ENCODE measurements at regions of chr6 and their contacts with region 1.

Region 1: DNA sequence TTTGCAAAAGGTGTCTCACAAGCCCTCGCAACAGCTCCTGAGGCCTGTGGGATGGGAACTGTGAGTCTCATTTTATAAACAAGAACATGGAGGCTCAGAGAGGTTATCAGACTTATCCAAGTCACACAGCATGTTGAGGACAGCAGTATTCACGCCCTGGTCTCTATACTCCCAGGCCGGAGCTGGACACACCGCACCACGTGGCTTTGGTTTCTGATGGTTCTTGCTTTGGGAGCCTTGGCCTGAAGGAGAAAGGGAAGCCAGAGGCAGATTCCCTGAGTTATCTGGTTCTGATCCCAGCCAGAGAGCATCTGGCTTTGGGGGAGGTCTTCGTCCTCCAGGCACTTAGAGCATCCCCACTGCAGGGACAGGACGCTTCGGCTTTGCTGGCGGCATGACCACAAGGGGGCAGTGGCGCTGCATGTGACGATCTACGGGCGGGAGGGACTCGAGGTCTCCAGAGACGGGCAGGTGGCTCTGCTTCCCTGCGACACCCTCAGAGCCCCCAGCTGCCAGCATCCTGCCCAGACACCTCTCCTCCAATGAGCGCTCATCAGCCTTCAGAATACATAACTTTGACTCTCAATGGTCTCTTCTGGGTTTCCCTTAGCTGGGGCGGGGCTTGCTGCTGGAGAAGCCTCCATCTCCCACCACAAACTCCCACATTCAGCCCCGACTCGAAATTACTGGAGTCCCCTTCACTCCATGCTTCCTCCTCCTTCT is 51.4 kb upstream of the SAYSD1 start:
- DNase-seq: peak; percentile 93
- ATAC-seq: peak; percentile 97
- H3K4me3 Mint-ChIP-seq: no peak overlapping the region
- H3K27ac Mint-ChIP-seq: no peak overlapping the region
- H3K4me1 Mint-ChIP-seq: peaks cover 5% of the 10 kb centered on the region
- H3K27me3 Mint-ChIP-seq: peaks cover 2% of the 10 kb centered on the region

Region 2: GRCh38 chr6:38973178-38974054 is 192.9 kb before region 1 on chr6:
- CTCF ChIA-PET with region 1: interaction called, 21 read pairs
- POLR2A ChIA-PET with region 1: no interaction called
- intact Hi-C with region 1: loop called in 1 of 2 experiments (anchors 1 kb)
- DNase-seq: peak; percentile 51
- ATAC-seq: peak; percentile 99
- H3K4me3 Mint-ChIP-seq: no peak overlapping the region
- H3K27ac Mint-ChIP-seq: no peak overlapping the region
- H3K4me1 Mint-ChIP-seq: peaks cover 3% of the 10 kb centered on the region
- H3K27me3 Mint-ChIP-seq: peaks cover 19% of the 10 kb centered on the region

Region 3: DNA sequence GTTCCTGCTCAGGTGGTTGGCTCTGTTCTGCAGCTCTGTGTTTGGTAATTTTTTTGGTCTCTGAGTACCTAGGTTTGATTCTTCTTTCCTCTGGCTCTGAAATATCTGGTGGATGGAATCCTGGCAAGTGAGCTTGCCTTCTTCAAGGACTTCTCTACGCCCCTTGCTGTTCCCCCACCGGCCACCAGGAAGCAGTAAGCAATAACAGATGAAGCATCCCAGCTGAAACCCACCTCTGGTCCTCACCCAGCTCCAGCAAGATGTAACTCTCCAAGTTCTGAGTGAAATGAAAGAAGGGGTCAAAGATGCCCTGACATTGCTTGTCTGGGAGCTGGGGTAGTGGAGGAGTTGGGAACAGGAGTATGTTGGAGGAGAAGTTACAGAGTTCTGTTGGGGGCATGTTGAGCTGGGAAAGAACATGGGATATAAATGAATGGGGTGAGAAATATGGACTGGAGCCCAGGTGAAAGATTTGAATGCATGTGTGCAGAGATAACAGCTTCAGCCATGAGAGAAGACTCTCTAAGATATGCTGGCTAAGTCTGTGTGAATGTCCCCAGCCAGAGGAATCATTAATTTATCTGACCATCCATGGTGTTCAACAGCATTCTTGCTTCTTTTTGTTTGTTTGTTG is 169.1 kb before region 1 on chr6:
- CTCF ChIA-PET with region 1: interaction called, 20 read pairs
- POLR2A ChIA-PET with region 1: no interaction called
- intact Hi-C with region 1: loop called (anchors 5 kb)
- DNase-seq: peak; percentile 68
- ATAC-seq: peak; percentile 55
- H3K4me3 Mint-ChIP-seq: no peak overlapping the region
- H3K27ac Mint-ChIP-seq: no peak overlapping the region
- H3K4me1 Mint-ChIP-seq: no peaks in the 10 kb centered on the region
- H3K27me3 Mint-ChIP-seq: peaks cover 29% of the 10 kb centered on the region

Region 4: GRCh38 chr6:39029156-39030011 is 137.0 kb before region 1 on chr6:
- CTCF ChIA-PET with region 1: interaction called, 3 read pairs
- POLR2A ChIA-PET with region 1: no interaction called
- intact Hi-C with region 1: loop called in 1 of 2 experiments (anchors 2 kb)
- DNase-seq: peak; percentile 80
- ATAC-seq: peak; percentile 92
- H3K4me3 Mint-ChIP-seq: no peak overlapping the region
- H3K27ac Mint-ChIP-seq: no peak overlapping the region
- H3K4me1 Mint-ChIP-seq: no peaks in the 10 kb centered on the region
- H3K27me3 Mint-ChIP-seq: peaks cover 32% of the 10 kb centered on the region

Region 5: GRCh38 chr6:39153766-39154397 is 12.5 kb before region 1 on chr6:
- CTCF ChIA-PET with region 1: interaction called, 11 read pairs
- POLR2A ChIA-PET with region 1: no interaction called
- intact Hi-C with region 1: no loop called
- DNase-seq: peak; percentile 63
- ATAC-seq: peak; percentile 94
- H3K4me3 Mint-ChIP-seq: no peak overlapping the region
- H3K27ac Mint-ChIP-seq: peak overlapping the region; percentile 84
- H3K4me1 Mint-ChIP-seq: peaks cover 52% of the 10 kb centered on the region
- H3K27me3 Mint-ChIP-seq: peaks cover 10% of the 10 kb centered on the region

Region 6: DNA sequence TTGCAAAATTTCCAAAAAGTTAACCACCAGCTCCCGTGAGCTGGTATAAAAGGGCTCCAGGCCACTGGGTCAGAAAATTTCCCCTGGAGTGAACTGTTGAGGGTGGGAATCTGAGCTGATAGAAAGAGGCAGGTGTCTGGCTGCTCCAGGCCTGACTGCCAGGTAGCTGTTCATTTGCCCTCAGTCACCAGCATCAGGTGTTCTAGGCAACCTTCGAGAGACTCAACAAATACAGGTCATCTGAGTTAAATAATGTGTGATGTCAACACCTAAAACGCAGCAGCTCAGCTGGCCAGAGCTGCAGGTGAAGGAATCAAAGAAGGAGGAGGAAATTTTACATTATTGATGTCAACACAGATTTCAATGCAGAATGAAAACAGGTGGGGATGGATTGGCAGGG is 16.3 kb after region 1 on chr6:
- CTCF ChIA-PET with region 1: interaction called, 29 read pairs
- POLR2A ChIA-PET with region 1: no interaction called
- intact Hi-C with region 1: no loop called
- DNase-seq: no peak
- ATAC-seq: no peak
- H3K4me3 Mint-ChIP-seq: no peak overlapping the region
- H3K27ac Mint-ChIP-seq: no peak overlapping the region
- H3K4me1 Mint-ChIP-seq: no peaks in the 10 kb centered on the region
- H3K27me3 Mint-ChIP-seq: no peaks in the 10 kb centered on the region

Region 7: GRCh38 chr6:39309942-39310531 is 143.7 kb after region 1 on chr6:
- CTCF ChIA-PET with region 1: interaction called, 211 read pairs
- POLR2A ChIA-PET with region 1: no interaction called
- intact Hi-C with region 1: loop called in 1 of 2 experiments (anchors 1 kb)
- DNase-seq: peak; percentile 81
- ATAC-seq: peak; percentile 79
- H3K4me3 Mint-ChIP-seq: no peak overlapping the region
- H3K27ac Mint-ChIP-seq: no peak overlapping the region
- H3K4me1 Mint-ChIP-seq: peaks cover 4% of the 10 kb centered on the region
- H3K27me3 Mint-ChIP-seq: peaks cover 25% of the 10 kb centered on the region

Region 8: GRCh38 chr6:39407446-39407993 is 241.2 kb after region 1 on chr6:
- CTCF ChIA-PET with region 1: no interaction called
- POLR2A ChIA-PET with region 1: no interaction called
- intact Hi-C with region 1: no loop called
- DNase-seq: no peak
- ATAC-seq: no peak
- H3K4me3 Mint-ChIP-seq: no peak overlapping the region
- H3K27ac Mint-ChIP-seq: no peak overlapping the region
- H3K4me1 Mint-ChIP-seq: no peaks in the 10 kb centered on the region
- H3K27me3 Mint-ChIP-seq: no peaks in the 10 kb centered on the region